CD8-positive, alpha-beta T cell (primary cell): ENCODE measurements at regions of chr19 and their contacts with region 1.

Region 1: DNA sequence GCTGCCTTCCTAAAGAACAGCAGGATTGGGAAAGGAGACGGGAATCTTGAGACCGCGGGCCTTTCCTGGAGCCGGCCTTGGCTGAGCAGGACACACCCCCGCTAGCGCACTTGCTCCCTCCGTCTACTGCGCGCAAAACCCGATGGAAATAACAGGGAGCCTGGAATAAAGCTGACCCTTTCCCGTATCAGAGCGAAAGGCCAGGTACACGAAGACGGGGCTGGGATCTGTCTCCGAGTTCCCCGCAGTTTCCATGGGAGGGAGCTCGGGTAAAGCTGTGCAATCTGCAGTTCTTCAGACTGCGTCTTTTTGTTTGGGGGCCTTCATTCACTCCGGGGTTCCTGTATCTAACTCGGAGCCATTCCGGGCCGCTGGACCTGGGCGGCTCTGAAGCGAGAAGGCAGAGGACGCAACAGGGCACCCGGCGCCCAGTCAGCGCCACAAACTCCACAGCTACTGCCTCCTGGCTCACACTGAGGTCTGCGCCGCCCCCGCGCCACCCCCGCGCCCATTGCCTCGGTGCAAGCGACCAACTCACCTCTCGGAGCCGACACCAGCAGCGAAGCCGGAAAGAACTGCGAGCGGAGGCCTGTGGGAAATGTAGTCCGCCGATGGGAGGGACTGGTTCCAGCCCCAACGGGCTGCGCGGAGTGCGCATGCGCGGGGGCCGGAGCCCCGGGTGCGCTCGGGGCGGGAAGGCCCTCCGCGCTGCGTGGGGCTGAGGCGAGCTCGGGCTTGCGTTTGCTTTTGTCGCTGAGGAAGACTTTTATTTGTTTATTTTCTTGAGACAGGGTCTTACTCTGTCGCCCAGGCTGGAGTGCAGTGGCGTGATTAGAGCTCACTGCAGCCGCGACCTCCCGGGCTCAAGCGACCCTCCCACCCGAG is at the start of gene ZFP14:
- DNase-seq: peak; percentile 88 to 97 (median 95)
- ATAC-seq: peak; percentile 97
- H3K4me3 ChIP-seq: peak within 1 kb of the TSS; percentile 68 to 82
- H3K4me3 Mint-ChIP-seq: peak within 1 kb of the TSS; percentile 95
- H3K27ac ChIP-seq: peak within 1 kb of the TSS; percentile 81 to 84
- H3K27ac Mint-ChIP-seq: peak within 1 kb of the TSS; percentile 98
- H3K4me1 ChIP-seq: peaks cover 10% of the 10 kb centered on the region
- H3K4me1 Mint-ChIP-seq: peaks cover 29% of the 10 kb centered on the region
- H3K27me3 ChIP-seq: no peaks in the 10 kb centered on the region
- H3K27me3 Mint-ChIP-seq: no peaks in the 10 kb centered on the region
- CTCF ChIP-seq: peak; percentile 58
- total RNA-seq, gene ZFP14: 5.0 to 5.7 TPM

Region 2: GRCh38 chr19:36214386-36215275 is 164.2 kb before region 1 on chr19 and contains the starts of genes ZNF146 and ZNF565:
- CTCF ChIA-PET with region 1: no interaction called
- POLR2A ChIA-PET with region 1: no interaction called
- intact Hi-C with region 1: loop called (anchors 2 kb)
- DNase-seq: peak; percentile 90 to 98 (median 95)
- ATAC-seq: peak; percentile 83
- H3K4me3 ChIP-seq: peak within 1 kb of the TSS; percentile 73 to 85
- H3K4me3 Mint-ChIP-seq: no peak within 1 kb of the TSS
- H3K27ac ChIP-seq: peak within 1 kb of the TSS; percentile 92 to 99
- H3K27ac Mint-ChIP-seq: no peak within 1 kb of the TSS
- H3K4me1 ChIP-seq: peaks cover 22% of the 10 kb centered on the region
- H3K4me1 Mint-ChIP-seq: peaks cover 32% of the 10 kb centered on the region
- H3K27me3 ChIP-seq: no peaks in the 10 kb centered on the region
- H3K27me3 Mint-ChIP-seq: no peaks in the 10 kb centered on the region
- CTCF ChIP-seq: no peak
- total RNA-seq, gene ZNF146: 16.8 to 18.9 TPM
- total RNA-seq, gene ZNF565: 9.4 to 10.8 TPM

Region 3: GRCh38 chr19:36489118-36489919 is 110.5 kb after region 1 on chr19 and contains the start of gene ZNF566:
- CTCF ChIA-PET with region 1: no interaction called
- POLR2A ChIA-PET with region 1: interaction called, 6 read pairs
- intact Hi-C with region 1: loop called (anchors 1 kb)
- DNase-seq: peak; percentile 84 to 98 (median 91)
- ATAC-seq: peak; percentile 88
- H3K4me3 ChIP-seq: peak within 1 kb of the TSS; percentile 84 to 93
- H3K4me3 Mint-ChIP-seq: peak within 1 kb of the TSS; percentile 99
- H3K27ac ChIP-seq: peak within 1 kb of the TSS; percentile 79 to 96
- H3K27ac Mint-ChIP-seq: peak within 1 kb of the TSS; percentile 96
- H3K4me1 ChIP-seq: peaks cover 6% of the 10 kb centered on the region
- H3K4me1 Mint-ChIP-seq: peaks cover 33% of the 10 kb centered on the region
- H3K27me3 ChIP-seq: no peaks in the 10 kb centered on the region
- H3K27me3 Mint-ChIP-seq: no peaks in the 10 kb centered on the region
- CTCF ChIP-seq: no peak
- total RNA-seq, gene ZNF566: 5.8 to 7.0 TPM

Region 4: DNA sequence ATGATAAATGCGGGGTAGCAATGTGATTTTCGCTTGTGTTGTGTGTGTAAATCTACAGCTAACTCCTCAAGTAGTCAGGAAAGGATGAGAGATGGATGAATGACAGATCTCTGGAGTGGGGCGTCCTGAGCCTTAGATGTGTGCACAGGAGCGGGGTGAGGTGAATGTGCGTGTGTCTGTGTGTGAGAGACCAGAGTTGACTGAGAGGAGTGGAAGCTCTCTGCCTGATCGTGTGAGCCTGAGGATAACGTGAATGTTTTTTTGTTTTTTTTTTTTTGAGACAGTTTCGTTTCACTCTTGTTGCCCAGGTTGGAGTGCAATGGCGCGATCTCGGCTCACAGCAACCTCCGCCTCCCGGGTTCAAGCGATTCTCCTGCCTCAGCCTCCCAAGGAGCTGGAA is 287.0 kb after region 1 on chr19:
- CTCF ChIA-PET with region 1: no interaction called
- POLR2A ChIA-PET with region 1: no interaction called
- intact Hi-C with region 1: loop called in 1 of 2 experiments (anchors 1 kb)
- DNase-seq: peak in 1 of 9 experiments; percentile 8
- ATAC-seq: no peak
- H3K4me3 ChIP-seq: peak overlapping the region; percentile 62 to 63
- H3K4me3 Mint-ChIP-seq: peak overlapping the region; percentile 98
- H3K27ac ChIP-seq: peak overlapping the region; percentile 59 to 72
- H3K27ac Mint-ChIP-seq: peak overlapping the region; percentile 73
- H3K4me1 ChIP-seq: peaks cover 8% of the 10 kb centered on the region
- H3K4me1 Mint-ChIP-seq: peaks cover 35% of the 10 kb centered on the region
- H3K27me3 ChIP-seq: no peaks in the 10 kb centered on the region
- H3K27me3 Mint-ChIP-seq: no peaks in the 10 kb centered on the region
- CTCF ChIP-seq: no peak

Region 5: DNA sequence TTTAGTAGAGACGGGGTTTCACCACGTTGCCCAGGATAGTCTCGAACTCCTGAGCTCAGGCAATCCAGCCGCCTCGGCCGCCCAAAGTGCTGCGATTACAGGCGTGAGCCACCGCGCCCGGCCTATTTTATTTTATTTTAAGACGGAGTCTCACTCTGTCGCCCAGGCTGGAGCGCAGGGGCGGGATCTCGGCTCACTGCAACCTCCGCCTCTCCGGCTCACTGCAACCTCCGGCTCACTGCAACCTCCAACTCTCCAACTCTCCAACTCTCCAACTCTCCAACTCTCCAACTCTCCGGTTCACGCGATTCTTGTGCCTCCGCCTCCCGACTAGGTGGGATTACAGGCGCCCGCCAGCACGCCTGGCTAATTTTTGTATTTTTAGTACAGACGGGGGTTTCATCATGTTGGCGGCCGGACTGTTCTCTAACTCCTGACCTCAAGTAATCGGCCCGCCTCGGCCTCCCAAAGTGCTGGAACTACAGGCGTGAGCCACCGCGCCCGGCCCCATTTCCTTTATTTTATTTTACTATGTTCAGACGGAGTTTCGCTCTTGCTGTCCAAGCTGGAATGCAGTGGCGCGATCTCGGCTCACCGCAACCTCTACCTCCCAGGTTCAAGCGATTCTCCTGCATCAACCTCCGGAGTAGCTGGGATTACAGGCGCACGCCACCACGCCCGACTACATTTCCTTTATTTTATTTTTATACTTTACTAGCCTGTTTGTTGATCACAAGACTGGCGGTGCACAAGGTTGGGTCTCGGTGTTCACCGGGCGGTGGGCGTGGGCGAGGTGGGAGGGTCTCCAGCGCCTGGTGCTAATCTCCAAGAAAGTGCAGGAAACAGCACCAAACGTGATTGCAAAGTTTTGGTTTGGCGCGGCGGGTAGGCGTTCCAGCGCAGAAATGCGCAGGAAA is 417.5 kb after region 1 on chr19:
- CTCF ChIA-PET with region 1: no interaction called
- POLR2A ChIA-PET with region 1: no interaction called
- intact Hi-C with region 1: loop called in 1 of 2 experiments (anchors 2 kb)
- DNase-seq: no peak
- ATAC-seq: no peak
- H3K4me3 ChIP-seq: peak overlapping the region; percentile 92 to 97
- H3K4me3 Mint-ChIP-seq: peak overlapping the region; percentile 97
- H3K27ac ChIP-seq: peak overlapping the region; percentile 76 to 90
- H3K27ac Mint-ChIP-seq: peak overlapping the region; percentile 98
- H3K4me1 ChIP-seq: peaks cover 3% of the 10 kb centered on the region
- H3K4me1 Mint-ChIP-seq: peaks cover 21% of the 10 kb centered on the region
- H3K27me3 ChIP-seq: no peaks in the 10 kb centered on the region
- H3K27me3 Mint-ChIP-seq: peaks cover 6% of the 10 kb centered on the region
- CTCF ChIP-seq: no peak

Region 6: DNA sequence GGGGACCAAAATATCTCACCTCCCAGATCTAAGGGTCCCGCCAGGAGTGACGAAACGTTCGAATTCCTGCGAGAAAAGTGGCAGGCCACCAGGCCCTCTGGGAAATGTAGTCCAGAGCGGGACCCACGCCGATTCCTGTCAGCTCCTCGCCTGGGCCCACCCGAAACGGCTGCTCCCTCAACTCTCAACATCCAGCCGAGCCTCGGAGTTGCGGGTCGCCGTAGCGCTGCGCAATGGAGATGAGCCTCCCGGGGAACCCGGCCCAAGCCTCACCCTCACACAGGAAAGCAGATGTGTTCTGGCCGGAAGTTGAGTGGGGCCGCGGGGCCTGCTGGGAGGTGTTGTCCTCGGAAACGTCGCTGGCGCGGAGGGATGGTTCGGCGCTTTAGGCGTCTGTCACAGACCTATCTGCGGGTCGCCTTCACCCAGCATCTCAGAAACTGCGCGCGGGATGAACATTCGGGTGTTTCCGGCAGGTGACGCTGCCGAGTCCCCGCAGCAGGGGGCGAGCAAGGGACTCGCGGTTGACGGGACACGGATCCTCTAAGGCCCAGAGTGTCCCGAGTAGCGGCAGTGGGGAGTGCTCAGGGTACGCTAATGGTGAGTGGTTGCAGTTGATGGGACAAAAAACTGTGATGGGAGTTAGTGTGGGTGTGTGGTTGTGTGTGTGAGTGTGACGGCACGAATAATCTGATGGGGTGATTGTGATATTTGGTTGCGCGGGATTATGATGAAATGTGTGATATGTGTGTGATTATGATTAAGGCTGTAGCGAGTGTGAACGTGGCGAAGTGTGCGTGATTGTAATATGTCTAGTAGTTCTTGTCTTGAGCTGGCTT is 537.3 kb after region 1 on chr19 and contains the starts of genes ZNF568 and ZNF829:
- CTCF ChIA-PET with region 1: no interaction called
- POLR2A ChIA-PET with region 1: interaction called, 3 read pairs
- intact Hi-C with region 1: loop called (anchors 1 to 2 kb)
- DNase-seq: peak; percentile 82 to 97 (median 92)
- ATAC-seq: peak; percentile 97
- H3K4me3 ChIP-seq: peak within 1 kb of the TSS; percentile 75 to 79
- H3K4me3 Mint-ChIP-seq: peak within 1 kb of the TSS; percentile 89
- H3K27ac ChIP-seq: peak within 1 kb of the TSS; percentile 80 to 95
- H3K27ac Mint-ChIP-seq: peak within 1 kb of the TSS; percentile 95
- H3K4me1 ChIP-seq: peaks cover 10% of the 10 kb centered on the region
- H3K4me1 Mint-ChIP-seq: peaks cover 36% of the 10 kb centered on the region
- H3K27me3 ChIP-seq: no peaks in the 10 kb centered on the region
- H3K27me3 Mint-ChIP-seq: no peaks in the 10 kb centered on the region
- CTCF ChIP-seq: peak; percentile 91
- total RNA-seq, gene ZNF568: 4.6 to 5.5 TPM
- total RNA-seq, gene ZNF829: 6.1 to 6.2 TPM

Region 7: GRCh38 chr19:37217855-37218591 is 839.2 kb after region 1 on chr19 and contains the start of gene ZNF383:
- CTCF ChIA-PET with region 1: no interaction called
- POLR2A ChIA-PET with region 1: no interaction called
- intact Hi-C with region 1: loop called in 1 of 2 experiments (anchors 2 kb)
- DNase-seq: peak; percentile 68 to 92 (median 82)
- ATAC-seq: peak; percentile 88
- H3K4me3 ChIP-seq: peak within 1 kb of the TSS; percentile 71 to 92
- H3K4me3 Mint-ChIP-seq: peak within 1 kb of the TSS; percentile 87
- H3K27ac ChIP-seq: peak within 1 kb of the TSS; percentile 69 to 92
- H3K27ac Mint-ChIP-seq: peak within 1 kb of the TSS; percentile 93
- H3K4me1 ChIP-seq: peaks cover 11% of the 10 kb centered on the region
- H3K4me1 Mint-ChIP-seq: peaks cover 31% of the 10 kb centered on the region
- H3K27me3 ChIP-seq: no peaks in the 10 kb centered on the region
- H3K27me3 Mint-ChIP-seq: no peaks in the 10 kb centered on the region
- CTCF ChIP-seq: no peak
- total RNA-seq, gene ZNF383: 17.5 to 18.9 TPM